T-cell (primary cell): ENCODE measurements at regions of chr7 and their contacts with region 1.

Region 1: GRCh38 chr7:144835652-144836544 is at the start of gene TPK1:
- DNase-seq: peak; percentile 83 to 95 (median 87)
- ATAC-seq: peak; percentile 84 to 91 (median 87)
- H3K4me3 ChIP-seq: peak within 1 kb of the TSS; percentile 93 to 98
- H3K4me3 Mint-ChIP-seq: peak within 1 kb of the TSS; percentile 93 to 98 (median 95)
- H3K27ac ChIP-seq: peak within 1 kb of the TSS; percentile 94
- H3K27ac Mint-ChIP-seq: peak within 1 kb of the TSS; percentile 100
- H3K4me1 ChIP-seq: peaks cover 13 to 31% of the 10 kb centered on the region in 2 experiments
- H3K4me1 Mint-ChIP-seq: peaks cover 38 to 53% (median 45%) of the 10 kb centered on the region in 3 donors
- H3K27me3 ChIP-seq: no peaks in the 10 kb centered on the region
- H3K27me3 Mint-ChIP-seq: no peaks in the 10 kb centered on the region
- total RNA-seq, gene TPK1: 19.1 to 31.6 (median 22.0) TPM

Region 2: DNA sequence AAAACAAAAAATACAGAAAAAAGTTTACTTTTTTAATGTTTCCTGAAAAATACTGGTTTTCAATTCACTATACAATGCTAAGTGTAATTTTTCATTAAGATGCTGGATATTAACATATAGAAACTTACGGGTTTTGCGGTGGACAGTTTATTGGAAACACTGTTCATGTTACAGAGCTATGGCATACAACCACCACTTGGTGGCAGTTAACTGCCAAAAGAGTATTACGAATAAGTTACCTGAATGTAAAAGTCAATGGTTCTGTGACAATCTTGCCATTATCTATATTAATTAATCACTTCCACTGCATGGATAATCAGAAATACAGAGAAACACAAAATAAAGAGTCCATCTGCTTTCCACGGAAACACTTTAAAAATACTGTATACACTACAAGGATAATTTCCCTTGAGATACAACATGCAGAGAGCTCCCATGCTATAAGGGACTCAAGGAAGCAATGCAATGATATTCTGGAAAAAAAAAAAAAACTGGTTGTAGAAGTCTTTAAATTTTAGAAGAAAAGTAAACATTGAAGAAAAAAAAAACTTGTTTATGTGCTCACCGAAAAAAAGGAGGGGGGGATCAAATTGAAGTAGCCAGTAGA is 97.1 kb before region 1 on chr7:
- CTCF ChIA-PET with region 1: interaction called in 1 of 2 experiments, 10 read pairs
- POLR2A ChIA-PET with region 1: no interaction called
- DNase-seq: peak in 20 of 35 experiments; percentile 1 to 61 (median 10)
- ATAC-seq: peak in 3 of 4 experiments; percentile 57 to 62 (median 58)
- H3K4me3 ChIP-seq: no peak overlapping the region
- H3K4me3 Mint-ChIP-seq: no peak overlapping the region
- H3K27ac ChIP-seq: no peak overlapping the region
- H3K27ac Mint-ChIP-seq: no peak overlapping the region
- H3K4me1 ChIP-seq: no peaks in the 10 kb centered on the region
- H3K4me1 Mint-ChIP-seq: peaks cover 2 to 6% (median 6%) of the 10 kb centered on the region in 3 donors
- H3K27me3 ChIP-seq: no peaks in the 10 kb centered on the region
- H3K27me3 Mint-ChIP-seq: no peaks in the 10 kb centered on the region

Region 3: DNA sequence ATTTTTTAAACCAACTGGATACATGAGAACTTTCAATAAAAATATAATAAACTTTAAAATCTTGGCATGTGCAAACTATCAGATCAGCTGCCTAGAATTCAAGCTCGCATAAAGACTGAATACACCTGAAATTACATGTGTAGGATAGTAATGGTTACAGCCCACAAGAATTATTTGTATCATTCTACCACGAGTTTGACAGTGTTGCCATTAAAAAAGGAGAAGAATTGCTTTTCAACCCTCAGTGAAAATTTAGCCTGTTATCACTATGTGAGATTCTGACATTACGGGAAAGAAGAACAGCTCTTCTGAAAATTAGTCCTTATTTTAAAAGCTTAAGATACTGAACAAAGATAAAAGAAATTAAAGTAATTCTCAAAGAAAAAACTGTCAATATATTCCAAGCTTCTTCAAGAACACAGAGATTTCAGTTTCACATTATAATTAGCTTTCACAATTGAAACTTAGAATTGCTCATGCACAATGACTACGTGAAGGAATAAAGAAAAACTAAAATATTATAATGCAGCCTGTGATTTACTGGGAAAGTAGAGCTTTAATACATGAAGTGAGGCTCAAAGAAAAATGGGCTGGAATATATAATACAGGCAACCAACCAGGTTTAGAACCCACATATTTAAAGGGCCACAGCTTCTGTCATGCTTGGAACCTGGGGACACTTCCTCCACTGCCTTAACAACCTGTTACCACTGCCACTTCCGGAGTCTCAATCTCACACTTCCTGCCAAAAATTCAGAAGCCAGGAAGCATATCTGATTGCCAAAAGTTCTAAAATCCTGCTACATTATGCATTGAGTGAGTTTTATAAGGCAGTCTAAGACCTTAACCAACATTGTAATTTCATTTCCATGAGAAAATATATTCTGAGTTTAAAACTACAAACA is 23.3 kb before region 1 on chr7:
- CTCF ChIA-PET with region 1: interaction called, 4 to 22 read pairs
- POLR2A ChIA-PET with region 1: interaction called, 17 to 31 read pairs
- DNase-seq: peak in 33 of 35 experiments; percentile 9 to 76 (median 48)
- ATAC-seq: peak; percentile 94 to 99 (median 98)
- H3K4me3 ChIP-seq: no peak overlapping the region
- H3K4me3 Mint-ChIP-seq: peak overlapping the region; percentile 64 to 67 (median 67)
- H3K27ac ChIP-seq: peak overlapping the region; percentile 64
- H3K27ac Mint-ChIP-seq: peak overlapping the region; percentile 94 to 95
- H3K4me1 ChIP-seq: peaks cover 10 to 35% of the 10 kb centered on the region in 2 experiments
- H3K4me1 Mint-ChIP-seq: peaks cover 61 to 76% (median 71%) of the 10 kb centered on the region in 3 donors
- H3K27me3 ChIP-seq: no peaks in the 10 kb centered on the region
- H3K27me3 Mint-ChIP-seq: no peaks in the 10 kb centered on the region

Region 4: GRCh38 chr7:144818511-144818910 is 17.4 kb before region 1 on chr7:
- CTCF ChIA-PET with region 1: interaction called, 4 to 22 read pairs
- POLR2A ChIA-PET with region 1: interaction called, 17 to 31 read pairs
- DNase-seq: peak; percentile 22 to 86 (median 63)
- ATAC-seq: peak; percentile 96 to 99 (median 98)
- H3K4me3 ChIP-seq: no peak overlapping the region
- H3K4me3 Mint-ChIP-seq: peak overlapping the region; percentile 7 to 61 (median 47)
- H3K27ac ChIP-seq: peak overlapping the region; percentile 80
- H3K27ac Mint-ChIP-seq: peak overlapping the region; percentile 90 to 91
- H3K4me1 ChIP-seq: peaks cover 33 to 45% of the 10 kb centered on the region in 2 experiments
- H3K4me1 Mint-ChIP-seq: peaks cover 75 to 85% (median 76%) of the 10 kb centered on the region in 3 donors
- H3K27me3 ChIP-seq: no peaks in the 10 kb centered on the region
- H3K27me3 Mint-ChIP-seq: no peaks in the 10 kb centered on the region